ENCODE measurements at regions of chr15 and their contacts with region 1.

Region 1: DNA sequence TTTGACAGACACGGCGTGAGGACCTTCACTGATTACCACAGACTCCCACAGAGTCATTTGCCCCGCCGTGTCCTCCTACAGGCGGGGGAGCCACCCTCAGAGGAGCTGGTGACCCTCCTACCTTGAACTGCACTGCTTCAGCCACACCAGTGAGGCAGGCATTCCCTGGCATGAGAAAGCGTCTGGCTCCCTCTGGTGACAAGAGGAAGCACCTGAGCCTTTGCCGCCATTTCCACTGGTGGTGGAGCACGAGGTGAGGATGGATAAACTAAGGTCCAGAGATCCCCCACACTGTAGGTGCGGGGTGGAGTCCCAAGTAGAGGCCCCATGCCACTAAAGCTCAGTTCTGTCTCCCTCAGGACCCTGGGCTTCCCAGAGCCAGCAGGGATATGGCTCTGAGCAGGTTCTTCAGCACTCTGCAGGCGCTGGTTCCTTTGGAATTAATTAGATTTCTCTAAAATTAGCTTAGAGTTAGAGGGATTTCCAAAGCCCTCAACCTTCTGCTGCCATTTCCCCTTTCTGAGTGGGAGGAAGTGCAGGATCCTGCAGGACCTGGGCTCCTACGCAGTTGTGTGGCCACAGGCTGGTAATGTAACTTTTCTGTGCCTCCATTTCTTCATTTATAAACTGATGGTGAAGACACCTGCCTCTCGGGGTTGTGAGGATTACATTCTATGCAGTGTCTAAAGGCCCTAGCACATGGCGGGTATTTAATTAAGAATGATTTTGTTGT is 224.0 kb downstream of the SLCO3A1 start:
- DNase-seq: peak; percentile 83
- H3K4me3 Mint-ChIP-seq: no peak overlapping the region
- H3K27ac Mint-ChIP-seq: no peak overlapping the region
- H3K4me1 Mint-ChIP-seq: peaks cover 35% of the 10 kb centered on the region
- H3K27me3 Mint-ChIP-seq: no peaks in the 10 kb centered on the region
- CTCF ChIP-seq: peak; percentile 77

Region 2: DNA sequence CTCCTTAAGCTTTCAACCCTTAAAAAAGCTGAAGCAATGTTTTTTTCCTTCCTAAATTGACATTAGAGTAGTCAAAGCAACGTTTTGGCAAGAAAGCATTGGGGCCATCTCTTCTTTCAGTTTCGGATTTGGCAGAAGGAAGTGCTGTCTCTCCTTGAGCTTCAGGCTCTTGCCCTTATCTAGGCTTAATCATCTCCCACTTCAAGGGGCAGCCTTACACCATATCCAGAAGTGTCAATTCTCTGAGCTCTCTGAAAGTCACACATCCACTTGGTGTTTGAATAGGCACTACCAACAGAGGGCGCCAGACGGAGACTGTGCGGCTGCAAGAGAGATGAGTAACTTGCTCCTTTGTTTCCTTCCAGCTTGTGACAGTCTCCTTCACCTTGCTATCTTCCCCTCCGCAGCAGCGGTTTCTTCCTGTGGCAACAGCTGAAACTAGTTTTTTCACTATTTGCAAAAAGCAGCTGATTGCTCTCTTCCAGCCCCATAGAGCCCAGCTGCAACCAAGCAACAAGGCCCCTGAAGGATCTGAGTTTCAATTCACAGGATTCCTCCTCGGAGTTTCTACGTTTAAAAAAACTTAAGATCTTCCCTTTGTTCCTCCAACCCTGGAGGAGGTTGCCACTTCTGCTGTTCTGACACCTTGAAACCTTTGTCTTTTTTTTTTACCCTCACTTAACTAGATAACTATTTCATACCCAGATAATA is 371.0 kb before region 1 on chr15:
- CTCF ChIA-PET with region 1: interaction called, 6 read pairs
- intact Hi-C with region 1: loop called (anchors 5 kb)
- DNase-seq: peak; percentile 85
- H3K4me3 Mint-ChIP-seq: no peak overlapping the region
- H3K27ac Mint-ChIP-seq: no peak overlapping the region
- H3K4me1 Mint-ChIP-seq: no peaks in the 10 kb centered on the region
- H3K27me3 Mint-ChIP-seq: no peaks in the 10 kb centered on the region
- CTCF ChIP-seq: peak; percentile 87

Region 3: DNA sequence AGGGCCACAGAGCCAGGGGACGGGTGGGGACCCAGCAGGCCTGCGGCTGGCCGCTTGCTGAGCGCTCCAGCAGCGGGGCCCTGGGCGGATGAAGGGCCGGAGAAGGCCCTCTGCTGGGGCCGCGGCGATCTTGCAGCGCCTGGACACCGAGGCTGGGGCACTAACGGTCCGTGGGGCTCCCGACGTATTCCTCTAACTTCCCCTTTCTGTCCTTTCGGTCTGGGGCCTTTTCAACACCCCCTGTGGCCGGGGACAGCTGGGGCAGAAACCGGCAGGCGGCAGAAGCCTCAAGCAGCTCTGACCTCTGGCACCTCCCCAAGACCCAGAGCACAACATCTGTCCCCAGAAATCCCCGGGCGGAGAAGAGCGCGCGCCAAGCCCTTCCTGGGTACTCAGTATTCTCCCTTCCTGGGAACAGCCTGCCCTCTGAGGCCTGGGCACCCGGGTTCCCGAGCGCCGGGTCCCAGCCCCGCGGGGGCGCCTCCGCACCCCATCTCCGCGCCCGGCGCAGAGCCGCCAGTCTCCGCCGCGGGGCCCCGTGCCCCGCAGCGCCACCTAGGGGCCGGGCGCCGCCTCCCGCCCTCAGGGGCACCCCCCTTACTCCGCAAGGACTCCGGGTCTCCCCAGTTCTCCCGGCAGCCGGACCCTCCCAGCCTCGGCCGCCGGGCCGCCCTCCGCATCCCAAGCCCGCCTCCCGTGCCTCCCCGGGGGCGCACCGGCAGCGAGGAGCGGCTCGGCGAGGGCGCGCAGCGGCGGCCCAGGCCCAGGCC is 224.6 kb before region 1 on chr15:
- CTCF ChIA-PET with region 1: interaction called, 12 read pairs
- intact Hi-C with region 1: loop called (anchors 1 kb)
- DNase-seq: peak; percentile 87
- H3K4me3 Mint-ChIP-seq: peak overlapping the region; percentile 84
- H3K27ac Mint-ChIP-seq: peak overlapping the region; percentile 78
- H3K4me1 Mint-ChIP-seq: peaks cover 45% of the 10 kb centered on the region
- H3K27me3 Mint-ChIP-seq: no peaks in the 10 kb centered on the region
- CTCF ChIP-seq: peak; percentile 95

Region 4: GRCh38 chr15:91947683-91948608 is 129.6 kb before region 1 on chr15:
- CTCF ChIA-PET with region 1: no interaction called
- intact Hi-C with region 1: loop called (anchors 2 kb)
- DNase-seq: peak; percentile 68
- H3K4me3 Mint-ChIP-seq: peak overlapping the region; percentile 49
- H3K27ac Mint-ChIP-seq: peak overlapping the region; percentile 90
- H3K4me1 Mint-ChIP-seq: peaks cover 100% of the 10 kb centered on the region
- H3K27me3 Mint-ChIP-seq: no peaks in the 10 kb centered on the region
- CTCF ChIP-seq: no peak

Measured in Calu3 (cell line).